HCT116 (cell line): ENCODE measurements at regions of chr11 and their contacts with region 1.

Region 1: DNA sequence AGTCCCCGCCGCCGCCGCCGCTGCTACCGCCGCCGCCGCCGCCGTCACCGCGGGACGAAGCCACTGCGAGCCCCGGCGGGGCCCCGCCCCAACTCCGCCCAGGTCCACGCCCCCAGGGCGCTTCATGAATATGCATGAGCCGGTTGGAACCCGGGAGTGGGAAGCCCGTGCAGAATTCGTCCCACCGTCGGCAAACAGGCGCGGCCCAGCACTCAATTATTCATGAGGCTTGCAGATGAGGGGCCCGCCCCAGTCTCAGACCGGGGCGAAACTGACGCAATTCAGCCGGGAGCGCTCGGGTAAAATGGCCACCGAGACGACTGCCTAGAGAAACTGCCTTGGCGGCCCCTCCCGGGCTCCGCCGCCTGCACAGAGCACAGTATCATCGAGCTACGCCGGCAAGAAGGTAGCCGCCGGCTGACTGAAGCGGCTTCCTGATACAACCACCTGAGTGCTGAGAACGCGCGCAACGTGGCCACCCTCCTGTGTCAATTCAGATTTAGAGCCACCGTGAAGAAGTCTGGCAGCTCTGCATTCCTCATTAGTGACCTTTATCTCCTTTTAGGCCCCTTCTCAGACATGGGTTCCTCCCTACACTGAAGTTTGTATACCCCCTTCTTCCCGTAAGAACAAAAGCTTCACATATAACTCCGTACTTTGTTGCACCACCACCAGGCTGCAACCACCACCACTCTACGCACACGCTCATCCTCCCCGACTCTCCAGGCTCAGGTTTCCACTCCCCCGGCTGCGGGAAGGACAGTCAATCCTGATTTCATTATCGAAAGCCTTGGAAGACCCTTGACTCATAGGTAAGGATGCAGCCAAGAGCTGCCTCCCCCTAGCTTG is at the start of gene TNKS1BP1:
- DNase-seq: peak; percentile 86
- ATAC-seq: peak; percentile 83
- H3K4me3 ChIP-seq: peak within 1 kb of the TSS; percentile 67 to 75
- H3K27ac ChIP-seq: peak within 1 kb of the TSS; percentile 78
- H3K4me1 ChIP-seq: peaks cover 33 to 53% of the 10 kb centered on the region in 2 experiments
- H3K27me3 ChIP-seq: no peaks in the 10 kb centered on the region
- CTCF ChIP-seq: no peak
- POLR2A ChIP-seq: no peak
- RAD21 ChIP-seq: no peak
- total RNA-seq, gene TNKS1BP1: 77.6 TPM

Region 2: GRCh38 chr11:57172031-57172430 is 153.1 kb before region 1 on chr11:
- CTCF ChIA-PET with region 1: no interaction called
- POLR2A ChIA-PET with region 1: no interaction called
- RAD21 ChIA-PET with region 1: no interaction called
- intact Hi-C with region 1: no loop called
- DNase-seq: no peak
- ATAC-seq: no peak
- H3K4me3 ChIP-seq: no peak overlapping the region
- H3K27ac ChIP-seq: no peak overlapping the region
- H3K4me1 ChIP-seq: no peaks in the 10 kb centered on the region
- H3K27me3 ChIP-seq: peaks cover 17% of the 10 kb centered on the region
- CTCF ChIP-seq: no peak
- POLR2A ChIP-seq: no peak
- RAD21 ChIP-seq: no peak

Region 3: DNA sequence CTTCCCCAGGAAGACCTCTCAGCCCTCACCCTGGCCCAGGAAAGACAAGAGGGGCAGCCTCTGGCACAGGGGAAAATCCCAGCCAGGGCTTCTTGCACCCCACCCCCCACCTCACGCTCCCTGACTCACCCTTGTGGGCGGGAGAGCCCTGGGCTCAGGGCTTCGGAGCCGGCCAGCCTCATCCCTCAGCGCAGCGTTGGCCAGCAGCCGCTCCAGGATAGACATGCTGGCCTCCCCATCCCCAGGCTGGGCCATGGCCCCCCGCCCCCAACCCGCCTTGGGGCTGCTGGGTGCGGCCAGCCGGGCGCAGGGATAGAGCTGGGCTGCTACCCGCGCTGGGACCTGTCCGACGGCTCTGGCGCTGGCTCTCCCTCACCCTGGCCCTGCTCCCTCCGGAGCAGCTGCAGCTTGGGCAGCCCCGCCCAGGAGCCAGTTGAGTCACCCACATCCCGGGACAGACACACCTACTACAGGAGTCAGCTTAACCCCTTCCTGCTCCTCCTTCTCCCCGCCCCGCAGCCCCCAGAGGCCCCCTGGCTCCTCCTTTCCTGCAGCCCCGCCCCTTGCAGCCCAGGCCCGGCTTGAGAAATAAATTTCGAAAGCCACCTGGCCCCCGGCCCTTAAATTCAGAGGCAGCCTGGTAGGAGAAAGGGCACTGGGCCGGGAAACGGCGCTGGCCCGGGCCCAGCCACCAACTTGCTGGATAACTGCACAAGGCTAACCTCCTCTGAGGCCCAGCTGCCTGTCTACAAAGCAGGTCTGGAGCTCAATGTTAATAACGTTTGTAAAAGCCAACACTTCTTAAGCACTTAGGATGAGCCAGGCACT is 13.8 kb before region 1 on chr11:
- CTCF ChIA-PET with region 1: interaction called, 13 read pairs
- POLR2A ChIA-PET with region 1: interaction called, 42 read pairs
- RAD21 ChIA-PET with region 1: interaction called, 3 to 6 read pairs
- intact Hi-C with region 1: no loop called
- DNase-seq: peak; percentile 81
- ATAC-seq: peak; percentile 99
- H3K4me3 ChIP-seq: peak overlapping the region; percentile 52 to 63
- H3K27ac ChIP-seq: peak overlapping the region; percentile 84
- H3K4me1 ChIP-seq: peaks cover 13 to 23% of the 10 kb centered on the region in 2 experiments
- H3K27me3 ChIP-seq: no peaks in the 10 kb centered on the region
- CTCF ChIP-seq: no peak
- POLR2A ChIP-seq: no peak
- RAD21 ChIP-seq: no peak

Region 4: GRCh38 chr11:57335343-57336110 is 10.4 kb after region 1 on chr11 and contains the start of gene SSRP1:
- CTCF ChIA-PET with region 1: interaction called, 4 read pairs
- POLR2A ChIA-PET with region 1: interaction called, 17 read pairs
- RAD21 ChIA-PET with region 1: interaction called in 1 of 2 experiments, 3 read pairs
- intact Hi-C with region 1: loop called (anchors 1 kb)
- DNase-seq: peak; percentile 72
- ATAC-seq: peak; percentile 96
- H3K4me3 ChIP-seq: peak within 1 kb of the TSS; percentile 79 to 96
- H3K27ac ChIP-seq: peak within 1 kb of the TSS; percentile 61
- H3K4me1 ChIP-seq: peaks cover 8 to 20% of the 10 kb centered on the region in 2 experiments; a peak in 3 of 4 replicates
- H3K27me3 ChIP-seq: no peaks in the 10 kb centered on the region
- CTCF ChIP-seq: no peak
- POLR2A ChIP-seq: peak; percentile 43
- RAD21 ChIP-seq: no peak
- total RNA-seq, gene SSRP1: 260 TPM

Region 5: GRCh38 chr11:57571606-57572005 is 246.5 kb after region 1 on chr11:
- CTCF ChIA-PET with region 1: no interaction called
- POLR2A ChIA-PET with region 1: no interaction called
- RAD21 ChIA-PET with region 1: no interaction called
- intact Hi-C with region 1: no loop called
- DNase-seq: no peak
- ATAC-seq: no peak
- H3K4me3 ChIP-seq: no peak overlapping the region
- H3K27ac ChIP-seq: no peak overlapping the region
- H3K4me1 ChIP-seq: peaks cover 0 to 13% of the 10 kb centered on the region in 2 experiments; a peak in 3 of 4 replicates
- H3K27me3 ChIP-seq: no peaks in the 10 kb centered on the region
- CTCF ChIP-seq: no peak
- POLR2A ChIP-seq: no peak
- RAD21 ChIP-seq: no peak

Region 6: DNA sequence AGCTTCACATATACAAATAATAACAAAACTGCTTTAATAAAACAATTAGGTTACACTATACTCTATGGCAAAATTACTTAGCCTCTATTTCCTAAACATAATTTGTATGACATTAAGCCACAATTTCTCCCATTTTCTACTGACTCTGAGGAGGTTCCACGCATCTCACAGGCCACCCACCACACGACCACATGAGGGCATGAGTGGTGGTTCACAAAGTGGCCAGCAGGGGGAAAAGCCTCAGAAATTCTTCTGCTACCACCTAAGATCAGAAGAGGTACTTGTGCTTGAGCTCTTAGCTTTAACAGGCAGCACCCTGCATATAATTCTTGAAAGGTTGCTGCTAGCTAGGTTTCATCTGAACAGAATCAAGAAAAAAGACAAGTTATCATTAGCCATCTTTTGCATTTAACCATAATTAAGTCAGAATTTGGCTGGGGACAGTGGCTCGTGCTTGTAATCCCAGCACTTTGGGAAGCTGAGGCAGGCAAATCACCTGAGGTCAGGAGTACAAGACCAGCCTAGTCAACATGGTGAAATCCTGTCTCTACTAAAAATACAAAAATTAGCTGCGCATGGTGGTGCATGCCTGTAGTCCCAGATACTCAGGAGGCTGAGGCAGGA is 1242.9 kb after region 1 on chr11:
- CTCF ChIA-PET with region 1: no interaction called
- POLR2A ChIA-PET with region 1: no interaction called
- RAD21 ChIA-PET with region 1: no interaction called
- intact Hi-C with region 1: no loop called
- DNase-seq: peak; percentile 51
- ATAC-seq: peak; percentile 95
- H3K4me3 ChIP-seq: no peak overlapping the region
- H3K27ac ChIP-seq: no peak overlapping the region
- H3K4me1 ChIP-seq: peaks cover under 1 to 2% of the 10 kb centered on the region in 2 experiments; a peak in 3 of 4 replicates
- H3K27me3 ChIP-seq: no peaks in the 10 kb centered on the region
- CTCF ChIP-seq: peak; percentile 75 to 88 (median 80)
- POLR2A ChIP-seq: no peak
- RAD21 ChIP-seq: peak; percentile 44